ENCODE measurements at regions of chr3 and their contacts with region 1.

Region 1: DNA sequence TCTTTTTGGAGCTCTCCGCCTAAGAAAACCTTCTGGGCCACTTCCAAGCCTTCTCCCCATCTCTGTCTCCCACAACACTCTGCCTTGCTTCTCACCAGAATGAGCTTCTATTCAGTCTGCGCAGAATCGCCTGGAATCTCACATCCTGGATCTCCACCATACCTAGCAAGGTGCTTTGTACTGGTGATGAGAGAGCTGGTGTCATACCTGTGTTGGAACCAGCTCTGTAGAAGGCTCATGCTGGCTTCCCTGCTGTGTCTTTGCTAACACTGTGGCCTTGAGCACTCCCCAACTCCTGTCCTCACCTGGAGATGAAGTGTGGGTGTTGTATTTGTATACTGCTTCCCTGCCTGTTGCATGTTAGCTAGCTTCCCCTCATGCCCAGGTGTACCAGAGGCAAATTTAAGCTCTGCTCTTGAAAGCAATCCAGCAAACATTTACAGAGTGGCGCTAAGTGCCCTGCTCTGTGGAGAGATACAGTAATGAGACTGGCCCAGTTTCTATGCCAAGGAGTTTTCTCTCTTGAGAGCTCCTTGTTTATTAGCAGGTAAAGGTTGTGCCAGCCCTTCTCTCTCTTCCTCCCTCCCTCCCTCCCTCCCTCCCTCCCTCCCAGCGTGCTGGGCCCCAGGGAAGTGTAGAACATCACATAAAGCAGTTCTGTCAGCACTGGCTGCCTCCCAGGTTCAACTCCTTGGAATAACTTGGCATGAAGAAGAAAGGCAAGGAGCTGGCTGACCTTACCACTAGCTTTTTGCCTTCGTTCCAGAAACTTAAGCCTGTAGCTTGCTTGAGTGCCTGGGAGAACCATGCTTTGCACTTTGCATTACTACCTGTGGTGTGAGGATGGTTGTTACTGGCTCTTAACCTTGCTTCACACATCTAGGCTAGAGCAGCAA is 54.9 kb downstream of the TRIM71 start:
- DNase-seq: peak; percentile 37
- H3K4me3 Mint-ChIP-seq: no peak overlapping the region
- H3K27ac Mint-ChIP-seq: peak overlapping the region; percentile 19
- H3K4me1 Mint-ChIP-seq: peaks cover 22% of the 10 kb centered on the region
- H3K27me3 Mint-ChIP-seq: no peaks in the 10 kb centered on the region
- CTCF ChIP-seq: no peak

Region 2: GRCh38 chr3:32584660-32585059 is 288.1 kb before region 1 on chr3:
- CTCF ChIA-PET with region 1: no interaction called
- POLR2A ChIA-PET with region 1: no interaction called
- intact Hi-C with region 1: no loop called
- DNase-seq: no peak
- H3K4me3 Mint-ChIP-seq: no peak overlapping the region
- H3K27ac Mint-ChIP-seq: no peak overlapping the region
- H3K4me1 Mint-ChIP-seq: no peaks in the 10 kb centered on the region
- H3K27me3 Mint-ChIP-seq: no peaks in the 10 kb centered on the region
- CTCF ChIP-seq: no peak

Region 3: GRCh38 chr3:32913790-32914446 is 41.2 kb after region 1 on chr3:
- CTCF ChIA-PET with region 1: interaction called, 8 read pairs
- POLR2A ChIA-PET with region 1: interaction called, 11 read pairs
- intact Hi-C with region 1: no loop called
- DNase-seq: peak; percentile 96
- H3K4me3 Mint-ChIP-seq: no peak overlapping the region
- H3K27ac Mint-ChIP-seq: peak overlapping the region; percentile 87
- H3K4me1 Mint-ChIP-seq: peaks cover 13% of the 10 kb centered on the region
- H3K27me3 Mint-ChIP-seq: no peaks in the 10 kb centered on the region
- CTCF ChIP-seq: no peak

Region 4: DNA sequence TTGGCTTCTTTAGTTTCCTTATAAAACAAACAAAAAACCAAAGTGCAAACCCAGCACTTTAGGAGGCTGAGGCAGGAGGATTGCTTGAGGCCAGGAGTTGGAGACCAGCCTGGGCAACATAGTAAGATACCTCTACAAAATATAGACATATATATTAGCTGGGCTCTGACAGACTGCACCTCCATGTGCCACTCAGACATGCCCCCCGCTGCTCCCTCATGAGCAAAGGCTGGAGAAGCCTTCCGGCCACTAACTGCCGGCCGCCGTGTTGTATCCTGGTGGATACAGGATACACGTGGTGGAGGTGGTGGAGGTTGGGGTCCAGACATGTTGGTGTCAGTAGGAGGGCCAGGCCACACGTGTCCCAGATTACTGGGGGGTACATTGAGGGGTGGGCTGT is 49.3 kb after region 1 on chr3:
- CTCF ChIA-PET with region 1: interaction called, 8 read pairs
- POLR2A ChIA-PET with region 1: interaction called, 10 read pairs
- intact Hi-C with region 1: no loop called
- DNase-seq: no peak
- H3K4me3 Mint-ChIP-seq: no peak overlapping the region
- H3K27ac Mint-ChIP-seq: peak overlapping the region; percentile 69
- H3K4me1 Mint-ChIP-seq: peaks cover 9% of the 10 kb centered on the region
- H3K27me3 Mint-ChIP-seq: no peaks in the 10 kb centered on the region
- CTCF ChIP-seq: no peak

Region 5: DNA sequence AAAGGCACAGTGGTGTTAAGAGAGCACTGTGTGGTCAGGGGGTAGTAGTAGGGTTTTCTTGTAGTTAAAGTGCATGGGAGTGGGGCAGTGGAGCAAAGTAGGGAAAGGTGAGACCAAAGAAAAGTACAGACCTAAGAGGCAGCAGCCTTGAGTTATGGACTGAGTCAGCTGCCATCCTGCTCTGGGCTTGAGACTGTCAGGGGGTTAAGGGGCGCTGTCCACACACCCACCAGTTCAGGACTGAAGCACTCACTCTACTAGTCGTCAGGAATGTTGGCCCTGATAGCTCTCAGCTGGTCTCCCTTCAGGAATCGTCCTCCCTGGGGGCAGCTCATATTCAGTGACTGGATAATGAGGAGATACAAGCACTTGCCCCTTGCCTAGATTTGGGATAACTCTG is 86.6 kb after region 1 on chr3:
- CTCF ChIA-PET with region 1: no interaction called
- POLR2A ChIA-PET with region 1: no interaction called
- intact Hi-C with region 1: no loop called
- DNase-seq: no peak
- H3K4me3 Mint-ChIP-seq: no peak overlapping the region
- H3K27ac Mint-ChIP-seq: no peak overlapping the region
- H3K4me1 Mint-ChIP-seq: peaks cover 11% of the 10 kb centered on the region
- H3K27me3 Mint-ChIP-seq: no peaks in the 10 kb centered on the region
- CTCF ChIP-seq: no peak

Region 6: GRCh38 chr3:33016851-33017405 is 144.2 kb after region 1 on chr3:
- CTCF ChIA-PET with region 1: no interaction called
- POLR2A ChIA-PET with region 1: no interaction called
- intact Hi-C with region 1: no loop called
- DNase-seq: no peak
- H3K4me3 Mint-ChIP-seq: no peak overlapping the region
- H3K27ac Mint-ChIP-seq: no peak overlapping the region
- H3K4me1 Mint-ChIP-seq: no peaks in the 10 kb centered on the region
- H3K27me3 Mint-ChIP-seq: no peaks in the 10 kb centered on the region
- CTCF ChIP-seq: no peak

Region 7: DNA sequence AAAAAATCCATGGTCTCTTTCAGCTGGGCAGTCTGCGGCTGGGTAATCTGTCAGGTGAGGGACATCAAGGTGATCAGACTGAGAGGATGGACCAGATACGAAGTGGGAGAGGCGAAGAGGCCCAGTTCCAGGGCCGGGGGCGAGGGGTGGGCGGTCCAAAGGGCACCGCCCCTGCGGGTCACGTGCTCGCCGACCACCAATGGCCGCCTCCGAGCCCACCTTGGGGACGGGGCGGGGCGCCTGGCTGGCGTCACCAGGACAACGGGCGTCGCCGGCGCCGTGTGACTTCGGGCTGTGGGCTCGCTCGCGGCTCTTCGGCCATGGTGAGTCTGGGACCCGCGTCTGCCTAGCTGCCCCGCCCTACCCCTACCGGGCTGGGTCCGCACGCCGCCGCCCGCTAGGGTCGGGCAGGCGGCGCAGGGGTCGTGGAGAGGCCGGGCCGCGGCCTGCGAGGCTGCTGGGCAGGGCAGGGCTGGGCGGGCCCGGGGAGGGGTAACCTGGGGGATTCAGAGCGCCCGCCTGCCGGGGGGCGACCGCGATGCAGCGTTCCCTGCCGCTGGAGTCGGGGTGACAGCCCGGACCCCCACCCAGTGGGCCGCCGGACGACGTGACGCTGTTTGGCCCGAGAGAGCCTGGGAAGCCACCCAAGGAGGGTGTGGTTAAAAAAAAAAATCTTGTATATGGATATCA is 404.6 kb after region 1 on chr3 and contains the start of gene FBXL2:
- CTCF ChIA-PET with region 1: no interaction called
- POLR2A ChIA-PET with region 1: no interaction called
- intact Hi-C with region 1: no loop called
- DNase-seq: peak; percentile 76
- H3K4me3 Mint-ChIP-seq: peak within 1 kb of the TSS; percentile 75
- H3K27ac Mint-ChIP-seq: peak within 1 kb of the TSS; percentile 85
- H3K4me1 Mint-ChIP-seq: peaks cover 11% of the 10 kb centered on the region
- H3K27me3 Mint-ChIP-seq: no peaks in the 10 kb centered on the region
- CTCF ChIP-seq: no peak
- total RNA-seq, gene FBXL2: 9.6 and 9.8 TPM in 2 replicates